ENCODE measurements at regions of chr13 and their contacts with region 1.

Region 1: GRCh38 chr13:76016799-76017400 is 380.8 kb downstream of the LMO7 start:
- DNase-seq: peak; percentile 9
- H3K4me3 Mint-ChIP-seq: no peak overlapping the region
- H3K27ac Mint-ChIP-seq: no peak overlapping the region
- H3K4me1 Mint-ChIP-seq: peaks cover 18% of the 10 kb centered on the region
- H3K27me3 Mint-ChIP-seq: no peaks in the 10 kb centered on the region
- CTCF ChIP-seq: no peak

Region 2: GRCh38 chr13:75687150-75687763 is 329.6 kb before region 1 on chr13:
- CTCF ChIA-PET with region 1: no interaction called
- intact Hi-C with region 1: loop called (anchors 10 kb)
- DNase-seq: no peak
- H3K4me3 Mint-ChIP-seq: no peak overlapping the region
- H3K27ac Mint-ChIP-seq: no peak overlapping the region
- H3K4me1 Mint-ChIP-seq: peaks cover 11% of the 10 kb centered on the region
- H3K27me3 Mint-ChIP-seq: no peaks in the 10 kb centered on the region
- CTCF ChIP-seq: no peak

Region 3: GRCh38 chr13:75876360-75877050 is 140.4 kb before region 1 on chr13:
- CTCF ChIA-PET with region 1: no interaction called
- intact Hi-C with region 1: loop called (anchors 2 kb)
- DNase-seq: peak; percentile 17
- H3K4me3 Mint-ChIP-seq: no peak overlapping the region
- H3K27ac Mint-ChIP-seq: no peak overlapping the region
- H3K4me1 Mint-ChIP-seq: peaks cover 7% of the 10 kb centered on the region
- H3K27me3 Mint-ChIP-seq: no peaks in the 10 kb centered on the region
- CTCF ChIP-seq: no peak

Region 4: DNA sequence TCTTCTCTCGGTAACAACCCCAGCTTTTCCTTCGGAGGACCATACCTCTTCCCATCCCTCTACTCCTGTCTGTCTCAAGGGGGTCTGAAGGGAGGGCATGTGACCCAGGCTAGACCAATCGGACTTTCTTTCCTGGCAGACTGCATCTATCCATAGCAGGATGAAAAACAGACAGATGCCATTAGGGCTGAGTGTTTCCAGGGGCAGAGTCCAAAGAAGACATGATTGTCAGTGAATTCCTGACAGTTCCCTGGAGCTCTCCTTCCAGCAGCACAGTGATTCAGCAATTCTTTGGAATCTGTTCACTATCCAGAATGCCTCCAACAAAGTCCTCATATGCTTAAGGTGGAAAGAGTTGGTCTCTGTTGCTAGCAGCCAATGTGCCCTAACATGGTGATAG is 679.5 kb after region 1 on chr13:
- CTCF ChIA-PET with region 1: no interaction called
- intact Hi-C with region 1: no loop called
- DNase-seq: no peak
- H3K4me3 Mint-ChIP-seq: no peak overlapping the region
- H3K27ac Mint-ChIP-seq: no peak overlapping the region
- H3K4me1 Mint-ChIP-seq: no peaks in the 10 kb centered on the region
- H3K27me3 Mint-ChIP-seq: no peaks in the 10 kb centered on the region
- CTCF ChIP-seq: no peak

Measured in Calu3 (cell line).